B cell (primary cell): ENCODE measurements at regions of chr21 and their contacts with region 1.

Region 1: DNA sequence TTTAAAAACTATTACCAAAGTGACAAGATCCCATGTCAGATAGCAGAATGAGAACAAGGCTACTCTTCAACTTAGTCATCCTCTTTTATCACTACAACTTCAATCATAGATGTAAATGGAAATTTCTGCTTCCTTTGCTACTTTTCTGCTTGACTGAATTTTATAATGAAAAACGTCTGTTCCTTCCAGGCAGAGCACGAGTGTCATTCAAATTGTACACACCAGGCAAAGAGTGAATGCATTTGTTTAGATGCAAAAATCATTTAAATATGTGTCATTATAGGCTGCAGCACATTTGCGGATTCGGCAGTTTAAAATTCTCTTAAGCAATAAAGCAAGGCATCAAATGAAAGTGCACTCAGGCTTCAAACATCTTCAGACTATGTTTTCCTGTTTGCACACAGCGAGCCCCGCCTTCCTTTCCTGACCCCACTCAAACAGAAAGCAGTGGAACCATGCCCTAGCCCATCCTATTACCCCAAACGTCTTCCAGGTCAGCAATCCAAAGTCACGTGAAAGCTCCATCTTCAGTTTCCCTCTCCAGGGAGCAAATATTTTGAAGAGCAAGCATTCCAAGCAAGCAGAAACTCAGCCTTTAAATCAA is 99.6 kb downstream of the APP start:
- DNase-seq: peak; percentile 54
- ATAC-seq: peak; percentile 75
- H3K4me3 ChIP-seq: peak overlapping the region in 4 of 5 experiments; percentile 11 to 59 (median 48)
- H3K4me3 Mint-ChIP-seq: peak overlapping the region; percentile 85
- H3K27ac ChIP-seq: peak overlapping the region; percentile 39 to 67
- H3K27ac Mint-ChIP-seq: peak overlapping the region; percentile 87
- H3K4me1 ChIP-seq: peaks cover 17 to 26% of the 10 kb centered on the region in 2 donors
- H3K4me1 Mint-ChIP-seq: peaks cover 30% of the 10 kb centered on the region
- H3K27me3 ChIP-seq: no peaks in the 10 kb centered on the region
- H3K27me3 Mint-ChIP-seq: no peaks in the 10 kb centered on the region
- CTCF ChIP-seq: no peak

Region 2: DNA sequence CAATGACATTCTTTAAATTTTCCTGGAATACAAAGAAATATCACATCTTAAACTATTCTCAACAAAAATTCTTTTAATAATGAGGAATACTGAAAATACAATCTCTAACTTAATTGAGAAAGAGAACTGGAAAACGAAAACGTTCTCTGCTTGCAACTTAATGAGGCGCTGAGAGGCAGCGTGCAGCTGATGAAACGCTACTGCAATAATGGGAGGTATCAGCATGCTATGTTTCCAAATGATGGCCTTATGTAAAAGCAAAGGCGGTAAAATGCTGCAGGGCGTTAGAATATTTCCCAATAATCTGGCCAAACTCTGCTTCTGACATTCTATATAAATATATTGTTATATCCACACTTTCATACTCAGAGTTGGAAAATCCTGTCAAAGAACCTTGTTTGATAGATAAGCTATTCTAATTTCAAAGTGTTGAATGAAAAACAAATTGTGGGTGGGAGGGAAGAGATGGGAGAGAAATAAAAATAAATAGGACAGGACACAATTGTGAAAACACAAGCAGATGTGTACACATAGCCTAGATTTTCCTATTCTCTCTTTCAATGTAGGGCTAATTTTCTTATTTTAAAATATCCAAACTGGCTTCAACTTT is 28.8 kb after region 1 on chr21:
- CTCF ChIA-PET with region 1: no interaction called
- POLR2A ChIA-PET with region 1: interaction called, 10 read pairs
- intact Hi-C with region 1: no loop called
- DNase-seq: no peak
- ATAC-seq: no peak
- H3K4me3 ChIP-seq: no peak overlapping the region
- H3K4me3 Mint-ChIP-seq: no peak overlapping the region
- H3K27ac ChIP-seq: no peak overlapping the region
- H3K27ac Mint-ChIP-seq: no peak overlapping the region
- H3K4me1 ChIP-seq: no peaks in the 10 kb centered on the region
- H3K4me1 Mint-ChIP-seq: peaks cover 2% of the 10 kb centered on the region
- H3K27me3 ChIP-seq: no peaks in the 10 kb centered on the region
- H3K27me3 Mint-ChIP-seq: no peaks in the 10 kb centered on the region
- CTCF ChIP-seq: no peak